ENCODE measurements at regions of chr22 and their contacts with region 1.

Region 1: DNA sequence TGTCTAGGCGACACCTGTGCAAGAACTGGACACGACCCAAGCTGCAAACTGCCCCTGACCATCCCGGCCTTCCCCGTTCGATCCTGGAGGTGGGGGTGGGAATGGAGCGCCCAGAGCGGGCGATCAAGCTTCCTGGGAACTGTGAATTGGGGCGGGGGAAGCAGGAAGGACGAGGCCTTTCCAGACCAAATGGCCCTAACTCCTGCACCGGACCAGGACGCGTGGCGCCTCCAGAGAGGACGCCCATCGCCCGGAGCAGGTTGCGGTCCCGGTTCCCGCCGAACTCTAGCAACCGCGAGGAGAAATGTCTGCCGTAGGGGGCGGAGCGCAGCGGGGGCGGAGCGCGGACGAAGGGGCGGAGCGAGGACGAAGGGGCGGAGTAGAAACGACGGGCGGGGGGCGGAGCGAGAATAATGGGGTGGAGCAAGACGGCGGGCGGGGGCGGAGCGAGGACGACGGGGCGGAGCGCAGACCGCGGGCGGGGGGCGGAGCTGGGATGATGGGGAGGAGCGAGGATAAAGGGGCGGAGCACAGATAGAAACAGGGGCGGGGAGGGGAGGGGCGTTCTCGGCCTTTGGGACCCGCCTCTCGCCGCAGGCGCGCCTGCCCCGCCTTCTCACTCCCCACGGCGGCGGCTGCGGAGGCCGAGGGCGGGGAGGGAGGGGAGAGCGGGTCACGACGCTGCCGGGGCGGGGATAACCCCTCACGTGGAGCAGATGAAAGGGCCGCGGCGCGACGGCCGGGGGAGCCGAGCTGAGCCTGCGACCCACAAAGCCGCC is at the start of gene ZNRF3:
- H3K4me3 ChIP-seq: peak within 1 kb of the TSS; percentile 77
- H3K27ac ChIP-seq: peak within 1 kb of the TSS; percentile 63; the same call in 1 of the 2 replicates
- H3K4me1 ChIP-seq: peaks cover 22% of the 10 kb centered on the region
- CTCF ChIP-seq: no peak

Region 2: DNA sequence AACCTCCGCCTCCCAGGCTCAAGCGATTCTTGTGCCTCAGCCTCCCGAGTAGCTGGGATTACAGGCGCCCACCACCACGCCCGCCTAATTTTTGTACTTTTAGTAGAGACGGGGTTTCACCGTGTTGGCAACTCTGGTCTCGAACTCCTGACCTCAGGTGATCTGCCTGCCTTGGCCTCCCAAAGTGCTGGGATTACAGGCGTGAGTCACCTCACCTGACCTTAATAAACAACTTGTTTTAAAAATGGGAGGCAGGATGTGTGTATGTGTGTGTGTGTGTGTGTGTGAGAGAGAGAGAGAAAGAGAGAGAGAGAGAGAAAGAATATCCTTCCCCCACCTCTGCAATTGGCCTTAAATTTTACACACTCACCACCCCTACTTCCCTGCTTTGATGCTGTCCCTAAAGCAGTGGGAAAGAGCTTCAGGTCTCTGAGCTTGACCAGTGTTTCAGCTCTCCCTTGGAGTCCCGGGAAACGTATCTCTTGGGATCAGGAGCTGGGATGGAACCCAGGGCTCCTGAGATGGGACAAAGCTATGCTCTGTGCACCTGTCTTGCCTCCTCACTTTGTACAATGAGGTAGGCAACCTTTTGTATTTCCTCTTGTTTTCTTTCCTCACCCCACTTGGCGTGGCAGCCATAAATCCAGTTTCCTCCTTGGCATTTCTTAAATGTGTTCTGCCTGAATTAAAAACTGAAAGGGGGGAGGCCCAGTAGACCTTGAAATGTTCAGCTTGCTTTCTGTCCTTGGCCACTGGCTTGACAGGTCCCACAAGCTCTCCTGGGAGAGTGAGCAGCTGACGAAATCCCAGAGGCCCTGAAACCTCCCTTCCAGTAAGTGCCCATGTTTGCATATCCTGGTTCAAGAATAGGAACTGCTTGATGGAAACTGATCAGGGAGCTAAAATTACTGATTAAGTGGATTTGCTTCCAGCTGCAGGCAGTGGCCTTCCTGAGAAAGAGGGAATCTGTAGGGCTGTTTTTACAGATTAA is 64.9 kb before region 1 on chr22:
- CTCF ChIA-PET with region 1: no interaction called
- POLR2A ChIA-PET with region 1: no interaction called
- H3K4me3 ChIP-seq: no peak overlapping the region
- H3K27ac ChIP-seq: no peak overlapping the region
- H3K4me1 ChIP-seq: peaks cover 4% of the 10 kb centered on the region
- CTCF ChIP-seq: no peak

Region 3: DNA sequence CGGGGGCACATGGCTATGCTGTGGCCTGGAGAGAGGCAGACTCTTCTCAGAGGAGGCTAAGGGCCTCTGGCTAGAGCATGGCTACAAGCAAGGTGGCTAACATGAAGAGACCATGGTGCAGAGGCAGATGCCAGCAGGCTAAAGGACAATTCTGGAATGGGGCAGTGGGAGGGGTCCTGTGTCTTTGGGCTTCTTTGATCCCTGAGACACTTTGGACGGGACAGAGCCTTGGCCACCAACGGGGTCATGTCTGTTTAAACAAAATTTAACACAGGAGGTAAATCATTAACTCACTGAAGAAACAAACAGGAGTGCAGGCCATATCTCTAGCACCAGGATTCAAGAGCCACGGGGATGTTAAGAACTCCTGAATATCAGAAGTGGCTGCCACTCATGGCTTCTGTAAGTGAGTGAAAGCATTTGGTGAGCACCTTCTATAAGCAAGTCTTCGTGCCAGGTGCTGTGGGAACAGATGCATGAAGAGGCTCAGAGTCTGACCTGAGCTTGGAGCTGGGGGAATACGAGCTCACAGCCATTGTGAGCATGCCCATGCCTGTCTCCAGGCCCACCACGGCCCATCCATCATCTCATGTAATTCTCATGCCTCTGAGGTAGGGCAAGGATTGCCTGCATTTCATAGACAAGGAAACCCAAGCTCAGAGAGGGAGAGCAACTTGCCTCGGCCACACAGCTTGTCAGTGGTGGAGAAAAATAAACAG is 18.0 kb before region 1 on chr22:
- CTCF ChIA-PET with region 1: no interaction called
- POLR2A ChIA-PET with region 1: interaction called, 11 read pairs
- H3K4me3 ChIP-seq: no peak overlapping the region
- H3K27ac ChIP-seq: no peak overlapping the region
- H3K4me1 ChIP-seq: no peaks in the 10 kb centered on the region
- CTCF ChIP-seq: no peak

Region 4: DNA sequence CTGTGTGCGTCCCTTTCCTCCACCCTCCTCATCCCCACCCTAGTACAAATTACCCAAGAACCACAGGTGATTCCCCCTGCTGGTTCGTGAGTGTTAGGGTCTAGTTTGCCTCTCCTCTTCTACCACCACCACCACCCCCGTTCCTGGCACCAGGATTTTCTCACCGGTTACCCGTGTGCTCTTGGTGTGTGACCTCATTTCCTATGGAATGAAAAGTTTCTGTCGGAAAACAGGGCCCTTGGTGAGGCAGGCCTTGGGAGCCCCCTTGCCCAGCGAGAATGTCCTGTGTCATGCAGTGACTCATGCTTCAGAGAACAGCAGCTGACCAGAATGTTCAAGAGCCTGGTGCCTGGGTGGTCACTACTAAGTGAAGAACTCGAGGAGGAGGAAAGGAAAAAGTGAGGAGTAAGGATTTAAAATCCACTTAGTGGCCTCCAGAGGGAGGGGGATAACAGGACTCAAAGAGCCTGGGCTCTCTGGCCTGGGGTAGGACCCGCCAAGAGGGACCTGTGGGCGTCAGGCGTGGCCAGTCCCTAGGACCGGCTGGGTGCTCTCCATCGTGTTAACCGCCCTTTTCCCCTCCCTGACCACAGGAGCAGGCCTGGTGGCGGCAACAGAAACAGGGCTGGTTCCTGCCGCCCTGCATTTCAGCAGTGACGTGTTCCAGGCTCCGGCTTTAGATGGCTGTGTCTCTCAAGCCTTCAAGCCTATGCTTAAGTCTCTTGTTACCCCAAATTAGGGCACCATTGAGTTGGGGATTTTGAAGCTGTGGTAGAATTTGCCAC is 148.4 kb after region 1 on chr22:
- CTCF ChIA-PET with region 1: interaction called, 3 read pairs
- POLR2A ChIA-PET with region 1: interaction called, 22 read pairs
- H3K4me3 ChIP-seq: peak overlapping the region; percentile 53
- H3K27ac ChIP-seq: peak overlapping the region; percentile 49
- H3K4me1 ChIP-seq: peaks cover 23% of the 10 kb centered on the region
- CTCF ChIP-seq: no peak

Measured in HEK293 (cell line).